Left colon (tissue), 2 donors: ENCODE measurements at regions of chr7 and their contacts with region 1.

Region 1: DNA sequence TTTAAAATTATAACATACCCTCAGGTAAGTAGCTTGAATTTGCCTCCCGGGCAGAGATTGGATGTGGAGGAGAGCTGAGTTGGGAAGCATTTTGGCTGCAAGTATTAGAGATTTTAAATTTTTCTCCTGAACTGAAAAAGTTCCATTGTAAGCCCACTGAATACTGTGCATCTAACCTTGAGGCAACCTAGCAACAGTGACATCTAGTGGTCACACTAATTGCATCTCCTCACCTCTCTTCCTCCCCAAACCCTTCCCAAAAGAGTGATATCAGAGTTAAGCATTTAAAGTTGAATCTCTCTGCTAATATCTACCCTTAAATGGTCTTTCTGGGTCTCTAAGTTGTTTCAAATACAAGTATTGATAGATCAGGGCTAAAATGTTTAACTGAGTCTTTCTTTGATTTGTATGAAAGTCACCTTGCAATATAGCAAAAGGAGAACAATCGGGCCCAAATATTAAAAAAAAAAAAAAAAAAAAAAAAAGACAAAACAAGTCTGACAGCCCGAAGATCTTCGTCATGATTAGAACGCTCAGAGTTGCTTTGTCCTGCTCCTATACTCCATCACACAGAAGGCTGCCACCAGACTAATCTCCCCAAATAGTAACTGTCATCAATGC is 40.4 kb upstream of the DLX5 start:
- DNase-seq: no peak
- ATAC-seq: peak; percentile 46

Region 2: GRCh38 chr7:95916573-95917297 is 1148.3 kb before region 1 on chr7:
- intact Hi-C with region 1: loop called in 1 of 2 experiments (anchors 10 kb)
- DNase-seq: peak; percentile 48 to 87
- ATAC-seq: peak; percentile 65

Region 3: GRCh38 chr7:96657347-96658021 is 407.6 kb before region 1 on chr7:
- intact Hi-C with region 1: no loop called
- DNase-seq: no peak
- ATAC-seq: no peak

Region 4: DNA sequence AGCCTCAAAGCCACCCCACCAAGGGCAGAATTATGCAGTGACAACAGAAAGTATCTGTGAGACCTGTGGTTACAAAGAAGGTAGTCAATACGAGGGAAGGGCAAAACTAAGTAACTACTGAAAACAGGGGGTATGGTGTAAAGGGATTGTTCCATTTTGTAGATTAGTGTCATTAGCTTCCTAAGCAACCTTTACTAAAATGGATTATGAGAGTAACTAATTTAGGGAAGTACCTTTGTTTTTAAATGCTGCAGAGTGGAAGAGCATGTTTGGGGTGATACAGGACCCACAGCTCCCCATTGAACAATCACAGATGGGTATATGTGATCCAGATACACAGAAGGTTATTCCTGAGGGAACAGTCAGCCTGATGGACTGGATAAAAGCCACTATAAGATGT is 615.5 kb after region 1 on chr7:
- intact Hi-C with region 1: loop called in 1 of 2 experiments (anchors 10 kb)
- DNase-seq: no peak
- ATAC-seq: no peak